HepG2 (cell line): ENCODE measurements at regions of chr11 and their contacts with region 1.

Region 1: DNA sequence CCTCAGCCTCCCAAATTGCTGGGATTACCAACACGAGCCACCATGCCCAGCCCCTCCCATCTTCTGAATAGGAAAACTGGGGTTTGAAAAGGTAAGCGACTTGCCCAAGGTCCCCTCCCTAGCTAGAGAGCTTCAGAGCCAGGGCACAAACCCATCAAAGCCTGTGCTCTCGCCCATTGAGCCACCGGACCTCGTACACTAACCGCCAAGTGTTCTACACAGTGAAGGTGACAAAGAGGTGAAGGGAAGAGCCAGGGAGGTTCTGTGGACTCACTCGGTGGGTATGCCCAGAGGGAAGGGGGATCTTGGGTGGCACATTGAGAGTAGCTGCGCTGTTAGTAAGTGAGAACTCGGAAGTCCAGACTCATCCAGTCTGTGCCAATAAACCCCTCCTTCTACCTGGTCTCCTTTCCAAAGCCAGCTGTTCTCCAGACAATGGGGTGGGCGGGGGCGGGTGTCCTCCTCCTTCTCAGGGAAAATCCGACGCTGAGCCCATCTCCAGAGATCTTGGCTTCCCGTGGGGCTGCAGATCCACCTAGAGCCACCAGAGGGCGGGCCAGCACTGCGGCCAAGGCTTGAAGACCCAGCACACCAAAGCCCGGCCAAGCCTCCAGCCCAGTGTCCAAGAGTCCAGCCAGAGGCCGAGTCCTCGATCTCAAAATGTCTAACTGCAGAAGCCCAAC is 3.2 kb upstream of the RTN4RL2 start:
- DNase-seq: peak; percentile 82
- ATAC-seq: peak; percentile 62
- H3K4me3 ChIP-seq: peak overlapping the region; percentile 57 to 75 (median 66); a peak in 3 of 6 replicates
- H3K27ac ChIP-seq: peak overlapping the region; percentile 49
- H3K4me1 ChIP-seq: peaks cover 72% of the 10 kb centered on the region
- H3K27me3 ChIP-seq: peaks cover 3 to 14% of the 10 kb centered on the region in 2 experiments; a peak in 4 of 5 replicates
- CTCF ChIP-seq: peak; percentile 97
- EP300 ChIP-seq: no peak
- POLR2A ChIP-seq: no peak
- RAD21 ChIP-seq: peak; percentile 94

Region 2: DNA sequence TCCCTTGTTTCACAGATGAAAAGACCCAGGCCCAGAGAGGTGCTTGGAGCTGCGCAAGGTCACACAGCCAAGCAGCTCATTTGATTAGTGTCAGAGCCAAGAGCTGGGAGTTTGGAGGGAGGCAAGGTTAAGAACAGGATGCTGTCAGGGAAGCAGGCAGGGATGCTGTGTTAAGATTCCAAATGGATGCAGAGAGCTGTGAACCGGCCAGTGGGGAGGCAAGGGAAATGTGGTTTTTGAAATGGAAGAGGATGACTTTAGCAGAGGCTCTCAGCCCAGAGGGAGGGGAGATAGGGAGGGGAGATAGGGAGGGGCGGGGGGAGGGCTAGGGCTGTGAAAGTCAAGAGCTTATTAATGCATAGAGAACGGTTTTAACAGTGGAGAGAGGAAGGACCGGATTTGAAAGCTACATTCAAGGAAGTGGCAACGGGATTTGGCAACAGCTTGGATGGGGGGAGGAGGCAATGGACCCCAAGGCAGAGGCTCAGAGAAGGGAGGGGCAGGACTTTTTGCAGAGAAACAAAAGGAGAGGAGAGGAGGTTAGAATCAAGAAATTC is 16.3 kb after region 1 on chr11:
- CTCF ChIA-PET with region 1: no interaction called
- POLR2A ChIA-PET with region 1: interaction called, 12 read pairs
- in situ Hi-C with region 1: no loop called
- intact Hi-C with region 1: no loop called
- DNase-seq: no peak
- ATAC-seq: no peak
- H3K4me3 ChIP-seq: no peak overlapping the region
- H3K27ac ChIP-seq: no peak overlapping the region
- H3K4me1 ChIP-seq: peaks cover 30% of the 10 kb centered on the region
- H3K27me3 ChIP-seq: no peaks in the 10 kb centered on the region
- CTCF ChIP-seq: no peak
- EP300 ChIP-seq: no peak
- POLR2A ChIP-seq: no peak
- RAD21 ChIP-seq: no peak

Region 3: GRCh38 chr11:57493507-57494503 is 36.7 kb after region 1 on chr11:
- CTCF ChIA-PET with region 1: interaction called, 3 read pairs
- POLR2A ChIA-PET with region 1: interaction called, 12 read pairs
- in situ Hi-C with region 1: no loop called
- intact Hi-C with region 1: no loop called
- DNase-seq: peak; percentile 73
- ATAC-seq: peak; percentile 45
- H3K4me3 ChIP-seq: no peak overlapping the region
- H3K27ac ChIP-seq: peak overlapping the region; percentile 76
- H3K4me1 ChIP-seq: peaks cover 54% of the 10 kb centered on the region
- H3K27me3 ChIP-seq: no peaks in the 10 kb centered on the region
- CTCF ChIP-seq: peak; percentile 97
- EP300 ChIP-seq: peak in 1 of 2 experiments; percentile 72; a peak in 2 of 4 replicates
- POLR2A ChIP-seq: no peak
- RAD21 ChIP-seq: peak; percentile 96

Region 4: GRCh38 chr11:57530596-57531507 is 73.8 kb after region 1 on chr11 and contains the start of gene TIMM10:
- CTCF ChIA-PET with region 1: interaction called, 26 read pairs
- POLR2A ChIA-PET with region 1: interaction called, 9 read pairs
- in situ Hi-C with region 1: no loop called
- intact Hi-C with region 1: loop called (anchors 1 kb)
- DNase-seq: peak; percentile 99
- ATAC-seq: peak; percentile 98
- H3K4me3 ChIP-seq: peak within 1 kb of the TSS; percentile 80 to 98 (median 96)
- H3K27ac ChIP-seq: peak within 1 kb of the TSS; percentile 64
- H3K4me1 ChIP-seq: peaks cover 42% of the 10 kb centered on the region
- H3K27me3 ChIP-seq: peaks cover 0 to 5% of the 10 kb centered on the region in 2 experiments; a peak in 1 of 5 replicates
- CTCF ChIP-seq: no peak; the same call in 1 of the 2 replicates
- EP300 ChIP-seq: peak in 1 of 2 experiments; percentile 21; a peak in 2 of 4 replicates
- POLR2A ChIP-seq: peak; percentile 64 to 70
- RAD21 ChIP-seq: no peak
- total RNA-seq, gene TIMM10: 82.2 and 103 TPM in 2 replicates

Region 5: DNA sequence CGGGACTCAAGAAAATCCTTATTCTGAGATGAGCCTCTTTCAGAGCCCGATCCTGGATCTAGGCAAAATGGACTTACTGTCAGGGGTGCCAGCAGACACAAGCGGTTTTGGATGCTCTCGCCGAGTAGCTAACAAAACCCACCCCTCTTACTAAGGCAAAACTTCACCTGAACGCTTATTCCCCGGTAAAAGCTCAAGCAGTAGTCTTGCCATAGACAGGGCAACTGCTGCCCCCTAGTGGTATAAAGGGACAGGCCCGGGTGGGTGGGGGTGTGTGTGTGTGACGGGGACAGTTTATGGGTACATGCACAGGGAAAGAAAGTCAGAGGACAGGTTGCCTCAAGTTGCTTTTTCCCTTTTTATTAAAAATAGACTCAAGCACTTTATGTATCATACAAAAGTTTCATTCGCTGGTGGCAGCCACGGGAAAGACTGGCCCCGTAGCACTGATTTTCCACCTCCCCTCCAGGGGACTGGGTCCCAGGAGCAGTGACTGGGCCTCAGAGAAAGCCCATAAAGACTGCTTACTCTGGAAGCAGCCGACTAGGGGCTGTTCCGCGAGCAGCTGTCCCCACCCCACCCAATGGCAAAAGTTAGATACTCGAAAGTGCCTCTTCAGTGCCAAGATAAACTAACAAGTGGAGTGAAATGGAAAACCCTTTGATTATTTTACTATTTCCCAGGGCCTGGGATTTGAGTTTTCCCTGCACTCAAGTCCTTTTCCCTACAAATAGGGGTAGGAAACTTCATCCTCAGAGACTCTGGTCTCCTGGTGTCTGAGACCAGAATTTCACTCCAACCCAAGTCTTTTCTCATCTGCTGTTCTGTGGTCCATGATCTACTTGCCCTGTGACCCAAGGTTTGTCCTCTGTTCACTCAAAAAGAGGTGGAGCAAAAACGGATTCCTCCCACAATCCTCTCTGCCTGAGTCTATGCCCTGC is 187.9 kb after region 1 on chr11:
- CTCF ChIA-PET with region 1: interaction called, 10 read pairs
- POLR2A ChIA-PET with region 1: interaction called, 8 read pairs
- in situ Hi-C with region 1: loop called (anchors 10 kb)
- intact Hi-C with region 1: loop called (anchors 1 kb)
- DNase-seq: peak; percentile 69
- ATAC-seq: peak; percentile 81
- H3K4me3 ChIP-seq: no peak overlapping the region
- H3K27ac ChIP-seq: no peak overlapping the region
- H3K4me1 ChIP-seq: peaks cover 37% of the 10 kb centered on the region
- H3K27me3 ChIP-seq: peaks cover 6 to 42% of the 10 kb centered on the region in 2 experiments
- CTCF ChIP-seq: peak; percentile 86
- EP300 ChIP-seq: no peak
- POLR2A ChIP-seq: no peak
- RAD21 ChIP-seq: peak; percentile 52